H1 (cell line): ENCODE measurements at regions of chr15 and their contacts with region 1.

Region 1: DNA sequence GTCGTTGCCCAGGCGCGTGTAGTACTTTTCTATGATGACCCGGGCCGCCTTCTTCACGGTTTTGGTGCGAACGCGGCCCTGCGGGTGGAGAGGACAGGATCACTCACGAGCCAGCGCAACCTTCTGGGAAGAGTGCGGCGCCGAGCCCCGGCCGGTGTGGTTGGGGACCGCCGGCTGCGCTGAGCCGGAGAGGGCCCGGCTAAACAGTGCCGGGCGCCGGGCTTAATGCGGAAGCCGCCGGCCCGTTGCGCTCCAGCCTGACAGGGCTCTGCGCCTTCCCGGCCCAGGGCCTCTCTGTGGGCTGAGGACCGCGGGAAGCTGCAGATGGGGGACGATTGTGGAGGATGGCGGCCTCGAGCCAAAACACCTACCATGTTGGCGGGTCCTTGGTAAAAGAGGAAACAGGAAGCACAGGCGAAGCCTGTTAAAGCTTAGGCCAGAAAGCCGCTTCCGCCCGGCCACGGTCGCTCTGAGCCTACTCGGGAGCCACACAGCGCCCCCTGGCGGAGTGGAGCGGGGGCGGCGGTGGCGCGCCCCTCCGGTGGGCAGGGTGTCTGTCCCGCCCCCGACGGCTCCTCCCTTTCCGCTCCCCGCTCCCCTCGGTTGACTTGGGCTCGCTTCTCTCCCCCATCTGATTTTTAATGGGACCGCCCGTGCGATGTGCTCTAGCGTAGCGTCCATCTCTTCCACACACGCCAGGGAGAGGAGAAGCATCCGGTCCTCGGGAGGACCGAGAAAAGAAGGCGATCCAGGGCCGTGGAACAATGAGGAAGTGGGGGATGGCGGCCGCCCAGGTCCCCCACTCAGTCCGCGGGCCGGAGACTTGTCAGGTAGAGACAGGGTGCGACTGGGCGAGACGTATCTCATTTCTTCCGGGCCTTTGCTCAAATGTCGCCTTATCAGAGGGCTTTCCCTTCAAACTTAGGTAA is at the start of gene RPS17:
- DNase-seq: peak; percentile 91 to 99
- H3K4me3 ChIP-seq: peak within 1 kb of the TSS; percentile 96 to 100 (median 98)
- H3K27ac ChIP-seq: peak within 1 kb of the TSS; percentile 90
- H3K4me1 ChIP-seq: peaks cover 5 to 24% (median 13%) of the 10 kb centered on the region in 4 experiments; a peak in 6 of 7 replicates
- H3K27me3 ChIP-seq: no peaks in the 10 kb centered on the region
- CTCF ChIP-seq: peak; percentile 85 to 98 (median 91)
- EP300 ChIP-seq: peak in 1 of 2 experiments; percentile 99; a peak in 2 of 3 replicates
- POLR2A ChIP-seq: peak; percentile 96 to 99
- RAD21 ChIP-seq: peak; percentile 17 to 50; a peak in 2 of 4 replicates
- total RNA-seq, gene RPS17: 2,416 and 2,501 TPM in 2 replicates

Region 2: GRCh38 chr15:82239685-82240391 is 300.5 kb before region 1 on chr15:
- CTCF ChIA-PET with region 1: no interaction called
- POLR2A ChIA-PET with region 1: no interaction called
- DNase-seq: no peak
- H3K4me3 ChIP-seq: no peak overlapping the region
- H3K27ac ChIP-seq: no peak overlapping the region
- H3K4me1 ChIP-seq: no peaks in the 10 kb centered on the region
- H3K27me3 ChIP-seq: no peaks in the 10 kb centered on the region
- CTCF ChIP-seq: no peak
- EP300 ChIP-seq: no peak
- POLR2A ChIP-seq: no peak
- RAD21 ChIP-seq: no peak

Region 3: GRCh38 chr15:82551666-82552247 is 11.4 kb after region 1 on chr15:
- CTCF ChIA-PET with region 1: interaction called, 4 read pairs
- POLR2A ChIA-PET with region 1: interaction called, 95 read pairs
- DNase-seq: no peak
- H3K4me3 ChIP-seq: no peak overlapping the region
- H3K27ac ChIP-seq: no peak overlapping the region
- H3K4me1 ChIP-seq: 0 out of 7 replicates have a peak, but pooled peaks cover 0 to 4% (median 0%) of the 10 kb centered on the region in 4 experiments
- H3K27me3 ChIP-seq: peaks cover 0 to 3% (median 0%) of the 10 kb centered on the region in 4 experiments; a peak in 2 of 7 replicates
- CTCF ChIP-seq: no peak
- EP300 ChIP-seq: no peak
- POLR2A ChIP-seq: no peak
- RAD21 ChIP-seq: no peak

Region 4: DNA sequence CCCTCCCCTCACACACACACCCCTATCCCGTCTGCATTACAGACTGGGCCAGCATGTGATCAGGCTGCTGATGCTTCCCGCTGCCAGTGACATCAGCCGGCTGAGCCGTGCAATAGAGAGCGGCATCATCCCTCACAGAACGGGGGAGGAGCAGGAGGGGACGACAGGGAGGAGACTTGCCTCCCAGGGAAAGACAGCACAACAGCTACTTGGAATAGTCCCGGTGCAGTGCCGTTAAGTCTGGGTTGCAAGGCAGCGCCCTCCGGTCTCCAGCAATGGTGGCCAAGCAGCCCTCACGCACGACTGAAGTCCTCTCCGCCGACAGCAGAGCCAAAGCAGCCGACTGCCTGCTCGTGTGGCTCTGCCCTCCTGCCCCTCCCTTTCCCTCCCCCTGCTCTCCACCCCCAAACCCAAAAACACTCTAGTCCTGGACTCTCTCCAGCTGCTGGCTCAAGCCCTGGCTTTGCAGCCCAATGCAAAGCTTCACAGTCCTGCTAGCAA is 31.5 kb after region 1 on chr15:
- CTCF ChIA-PET with region 1: interaction called, 5 read pairs
- POLR2A ChIA-PET with region 1: interaction called, 79 read pairs
- DNase-seq: peak; percentile 43 to 69
- H3K4me3 ChIP-seq: peak overlapping the region; percentile 12 to 50 (median 22); a peak in 6 of 8 replicates
- H3K27ac ChIP-seq: no peak overlapping the region
- H3K4me1 ChIP-seq: peaks cover 9 to 16% (median 11%) of the 10 kb centered on the region in 4 experiments
- H3K27me3 ChIP-seq: no peaks in the 10 kb centered on the region; a peak in 2 of 7 replicates
- CTCF ChIP-seq: no peak
- EP300 ChIP-seq: no peak; a peak in 1 of 3 replicates
- POLR2A ChIP-seq: peak in 1 of 2 experiments; percentile 71; a peak in 1 of 3 replicates
- RAD21 ChIP-seq: no peak

Region 5: GRCh38 chr15:82621964-82622363 is 81.6 kb after region 1 on chr15:
- CTCF ChIA-PET with region 1: interaction called, 4 read pairs
- POLR2A ChIA-PET with region 1: interaction called, 10 read pairs
- DNase-seq: no peak
- H3K4me3 ChIP-seq: no peak overlapping the region
- H3K27ac ChIP-seq: no peak overlapping the region
- H3K4me1 ChIP-seq: no peaks in the 10 kb centered on the region
- H3K27me3 ChIP-seq: no peaks in the 10 kb centered on the region
- CTCF ChIP-seq: peak in 2 of 3 experiments; percentile 36 to 55; a peak in 3 of 4 replicates
- EP300 ChIP-seq: no peak
- POLR2A ChIP-seq: no peak
- RAD21 ChIP-seq: peak; percentile 35 to 39; a peak in 2 of 4 replicates

Region 6: DNA sequence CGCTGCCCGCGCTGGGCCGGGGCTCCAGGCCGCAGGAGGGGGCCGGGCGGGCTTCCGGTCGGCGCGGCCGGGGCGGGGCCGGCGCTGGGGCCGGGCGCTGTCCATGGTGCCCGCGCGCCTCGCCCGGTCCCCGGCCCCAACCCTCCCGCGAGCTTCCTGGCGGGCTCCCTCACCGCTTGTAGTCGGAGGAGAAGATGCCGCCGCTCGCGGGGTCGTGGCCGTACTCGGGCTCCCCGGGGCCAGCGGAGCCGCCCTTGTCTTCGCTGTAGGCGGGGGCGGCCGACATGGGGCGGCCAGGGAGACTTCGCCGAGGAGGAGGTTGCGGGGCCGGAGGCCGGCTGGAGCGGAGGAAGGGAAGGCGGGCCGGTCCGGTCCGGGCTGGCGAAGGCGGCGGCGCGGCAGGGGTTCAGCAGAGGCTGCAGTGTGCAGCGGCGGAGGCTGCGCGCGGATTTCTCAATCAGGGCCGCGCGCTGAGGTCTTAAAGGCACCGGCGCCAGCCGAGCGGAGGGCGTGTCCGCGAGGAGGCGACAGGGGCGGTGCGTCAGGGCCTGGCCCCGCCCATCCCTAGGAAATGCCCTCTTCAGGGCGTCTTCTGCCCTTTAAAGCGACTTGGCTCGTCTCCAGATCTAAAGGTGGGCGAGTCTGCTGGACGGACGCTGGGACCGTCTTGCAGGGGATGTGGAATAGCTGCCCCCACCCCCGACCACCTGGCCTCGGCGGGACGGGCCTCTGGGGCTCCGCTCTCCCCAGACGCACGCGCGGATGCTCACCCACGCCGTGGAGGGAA is 169.3 kb after region 1 on chr15 and contains the start of gene AP3B2:
- CTCF ChIA-PET with region 1: no interaction called
- POLR2A ChIA-PET with region 1: interaction called, 11 read pairs
- DNase-seq: peak; percentile 49 to 83
- H3K4me3 ChIP-seq: peak within 1 kb of the TSS; percentile 39 to 99 (median 58)
- H3K27ac ChIP-seq: peak within 1 kb of the TSS; percentile 14; the same call in 1 of the 2 replicates
- H3K4me1 ChIP-seq: peaks cover 0 to 13% (median 5%) of the 10 kb centered on the region in 4 experiments; a peak in 6 of 7 replicates
- H3K27me3 ChIP-seq: peaks cover 0 to 7% (median 1%) of the 10 kb centered on the region in 4 experiments; a peak in 3 of 7 replicates
- CTCF ChIP-seq: no peak
- EP300 ChIP-seq: no peak
- POLR2A ChIP-seq: peak in 1 of 2 experiments; percentile 55; a peak in 1 of 3 replicates
- RAD21 ChIP-seq: no peak; a peak in 2 of 4 replicates
- total RNA-seq, gene AP3B2: 23.6 and 25.7 TPM in 2 replicates